Breast epithelium (tissue), 4 donors: ENCODE measurements at regions of chr2 and their contacts with region 1.

Region 1: GRCh38 chr2:17199741-17200140 is 318.5 kb downstream of the RAD51AP2 start:
- DNase-seq: no peak
- H3K4me3 ChIP-seq: no peak overlapping the region
- H3K27ac ChIP-seq: no peak overlapping the region
- H3K4me1 ChIP-seq: no peaks in the 10 kb centered on the region
- H3K27me3 ChIP-seq: no peaks in the 10 kb centered on the region
- CTCF ChIP-seq: no peak
- POLR2A ChIP-seq: no peak

Region 2: GRCh38 chr2:15460112-15460620 is 1739.6 kb before region 1 on chr2:
- intact Hi-C with region 1: no loop called
- DNase-seq: no peak
- H3K4me3 ChIP-seq: no peak overlapping the region
- H3K27ac ChIP-seq: no peak overlapping the region
- H3K4me1 ChIP-seq: no peaks in the 10 kb centered on the region
- H3K27me3 ChIP-seq: no peaks in the 10 kb centered on the region
- CTCF ChIP-seq: no peak
- POLR2A ChIP-seq: no peak

Region 3: DNA sequence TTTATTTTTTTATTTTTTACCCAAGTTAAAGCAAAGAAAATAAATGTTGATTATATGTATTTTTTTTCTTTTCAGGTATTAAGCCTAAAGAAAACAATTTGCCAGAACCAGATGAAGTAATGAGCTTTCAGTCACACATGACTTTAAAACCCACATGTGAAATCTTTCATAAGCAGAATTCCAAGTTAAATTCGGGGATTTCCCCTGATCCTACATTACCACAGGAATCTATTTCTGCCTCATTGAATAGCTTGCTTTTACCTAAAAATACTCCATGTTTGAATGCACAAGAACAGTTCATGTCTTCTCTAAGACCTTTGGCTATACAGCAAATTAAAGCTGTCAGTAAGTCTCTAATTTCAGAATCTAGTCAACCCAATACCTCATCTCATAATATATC is 580.8 kb after region 1 on chr2:
- intact Hi-C with region 1: loop called (anchors 5 kb)
- DNase-seq: no peak
- H3K4me3 ChIP-seq: no peak overlapping the region
- H3K27ac ChIP-seq: no peak overlapping the region
- H3K4me1 ChIP-seq: no peaks in the 10 kb centered on the region
- H3K27me3 ChIP-seq: no peaks in the 10 kb centered on the region
- CTCF ChIP-seq: no peak
- POLR2A ChIP-seq: no peak

Region 4: GRCh38 chr2:19073522-19073921 is 1873.8 kb after region 1 on chr2:
- intact Hi-C with region 1: no loop called
- DNase-seq: no peak
- H3K4me3 ChIP-seq: no peak overlapping the region
- H3K27ac ChIP-seq: no peak overlapping the region
- H3K4me1 ChIP-seq: no peaks in the 10 kb centered on the region
- H3K27me3 ChIP-seq: no peaks in the 10 kb centered on the region
- CTCF ChIP-seq: no peak
- POLR2A ChIP-seq: no peak